CD4-positive, alpha-beta T cell (primary cell): ENCODE measurements at regions of chr19 and their contacts with region 1.

Region 1: DNA sequence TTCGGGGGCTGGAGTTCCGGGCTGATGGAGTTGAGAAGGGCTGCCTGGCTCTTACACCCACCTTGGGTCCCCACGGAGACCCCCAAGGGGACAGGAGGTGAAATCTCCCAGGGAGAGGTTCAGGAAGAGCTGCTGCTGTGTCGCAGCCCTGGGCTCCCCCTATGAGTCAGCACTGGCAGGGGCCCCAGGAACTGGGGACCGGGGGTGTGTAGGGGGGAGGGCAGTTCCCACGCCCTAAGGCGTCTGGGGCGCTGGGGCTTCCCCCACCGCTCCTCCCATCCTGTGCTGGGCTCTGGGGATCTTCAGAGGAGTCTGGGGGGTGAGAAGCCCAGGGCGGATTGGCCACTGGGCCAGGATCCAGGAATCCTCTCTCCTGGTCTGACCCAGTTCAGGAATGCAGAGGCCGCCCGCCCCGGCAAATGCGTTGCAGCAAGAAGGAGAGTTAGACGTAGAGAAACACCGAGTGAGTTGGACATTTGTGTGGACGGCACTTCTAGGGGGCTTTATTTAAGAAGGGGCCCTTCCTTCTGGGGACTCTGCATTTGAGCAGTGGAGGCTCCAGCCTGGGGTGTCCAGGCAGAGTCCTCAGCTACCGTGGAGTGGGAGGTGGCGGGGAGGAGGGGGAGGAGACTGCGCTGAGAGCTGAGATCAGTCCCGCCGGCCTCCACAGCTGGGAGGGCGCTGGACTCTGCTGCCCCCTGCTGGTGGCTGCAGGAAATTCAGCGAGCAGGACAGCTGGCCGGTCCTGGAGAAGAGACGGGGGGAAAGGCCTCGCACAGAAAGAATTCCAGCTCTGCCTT is 15.0 kb upstream of the NANOS3 start:
- DNase-seq: peak; percentile 81 to 96 (median 86)
- ATAC-seq: peak; percentile 84
- H3K4me3 ChIP-seq: peak overlapping the region; percentile 73
- H3K4me3 Mint-ChIP-seq: peak overlapping the region; percentile 94
- H3K27ac ChIP-seq: peak overlapping the region; percentile 84 to 94
- H3K27ac Mint-ChIP-seq: peak overlapping the region; percentile 86
- H3K4me1 ChIP-seq: peaks cover 42% of the 10 kb centered on the region
- H3K4me1 Mint-ChIP-seq: peaks cover 41% of the 10 kb centered on the region
- H3K27me3 ChIP-seq: peaks cover 22 to 25% of the 10 kb centered on the region in 2 experiments
- H3K27me3 Mint-ChIP-seq: peaks cover 30% of the 10 kb centered on the region
- CTCF ChIP-seq: peak; percentile 99

Region 2: DNA sequence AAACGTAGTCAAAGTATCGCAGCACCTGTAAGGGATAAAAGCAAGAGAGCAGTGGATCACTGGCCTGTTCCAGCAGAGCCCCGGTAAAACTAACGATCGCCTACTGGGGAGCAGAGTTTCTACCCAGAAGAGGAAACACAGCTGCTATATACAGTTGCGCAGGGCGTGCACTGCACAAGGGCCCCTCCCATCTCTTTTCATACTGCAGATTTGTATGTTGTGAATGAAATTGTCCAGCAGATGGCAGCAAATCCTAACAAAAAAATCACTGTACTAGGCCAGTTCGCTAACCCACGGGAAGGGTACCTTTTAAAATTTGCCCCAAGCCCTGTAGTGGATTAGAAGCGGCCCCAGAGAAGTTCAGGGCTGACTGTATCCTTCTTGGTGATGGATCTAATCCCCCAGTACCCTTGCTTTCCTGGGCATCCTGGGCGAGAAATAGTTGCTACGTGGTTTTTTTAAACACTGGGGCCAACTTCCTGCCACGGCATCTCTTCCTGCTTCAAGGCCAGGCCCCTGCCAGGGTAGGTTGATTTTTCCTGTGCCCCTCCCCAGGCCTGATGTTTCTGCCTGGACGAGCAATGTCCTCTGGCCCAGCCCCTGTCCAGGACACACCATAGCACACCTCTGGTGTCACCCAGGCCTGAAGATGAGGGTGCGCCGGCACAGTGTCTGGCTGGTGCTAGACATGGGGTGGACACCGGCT is 584.7 kb before region 1 on chr19:
- CTCF ChIA-PET with region 1: interaction called, 6 read pairs
- POLR2A ChIA-PET with region 1: no interaction called
- intact Hi-C with region 1: loop called (anchors 2 to 5 kb)
- DNase-seq: peak; percentile 22 to 90 (median 48)
- ATAC-seq: peak; percentile 89
- H3K4me3 ChIP-seq: peak overlapping the region; percentile 15
- H3K4me3 Mint-ChIP-seq: peak overlapping the region; percentile 42
- H3K27ac ChIP-seq: peak overlapping the region in 1 of 2 donors; percentile 66
- H3K27ac Mint-ChIP-seq: peak overlapping the region; percentile 65
- H3K4me1 ChIP-seq: peaks cover 29% of the 10 kb centered on the region
- H3K4me1 Mint-ChIP-seq: peaks cover 22% of the 10 kb centered on the region
- H3K27me3 ChIP-seq: no peaks in the 10 kb centered on the region
- H3K27me3 Mint-ChIP-seq: no peaks in the 10 kb centered on the region
- CTCF ChIP-seq: peak; percentile 68

Region 3: GRCh38 chr19:13597640-13598039 is 264.3 kb before region 1 on chr19:
- CTCF ChIA-PET with region 1: no interaction called
- POLR2A ChIA-PET with region 1: no interaction called
- intact Hi-C with region 1: loop called (anchors 1 to 2 kb)
- DNase-seq: peak in 12 of 14 experiments; percentile 9 to 77 (median 37)
- ATAC-seq: peak; percentile 69
- H3K4me3 ChIP-seq: no peak overlapping the region
- H3K4me3 Mint-ChIP-seq: no peak overlapping the region
- H3K27ac ChIP-seq: no peak overlapping the region
- H3K27ac Mint-ChIP-seq: no peak overlapping the region
- H3K4me1 ChIP-seq: peaks cover 3% of the 10 kb centered on the region
- H3K4me1 Mint-ChIP-seq: no peaks in the 10 kb centered on the region
- H3K27me3 ChIP-seq: peaks cover 0 to 3% of the 10 kb centered on the region in 2 experiments
- H3K27me3 Mint-ChIP-seq: peaks cover 25% of the 10 kb centered on the region
- CTCF ChIP-seq: peak; percentile 48

Region 4: GRCh38 chr19:13794757-13795589 is 67.0 kb before region 1 on chr19 and contains the start of gene ZSWIM4:
- CTCF ChIA-PET with region 1: interaction called, 78 read pairs
- POLR2A ChIA-PET with region 1: interaction called, 6 read pairs
- intact Hi-C with region 1: no loop called
- DNase-seq: peak; percentile 66 to 97 (median 90)
- ATAC-seq: peak; percentile 85
- H3K4me3 ChIP-seq: peak within 1 kb of the TSS; percentile 70
- H3K4me3 Mint-ChIP-seq: peak within 1 kb of the TSS; percentile 96
- H3K27ac ChIP-seq: peak within 1 kb of the TSS; percentile 59 to 64
- H3K27ac Mint-ChIP-seq: peak within 1 kb of the TSS; percentile 90
- H3K4me1 ChIP-seq: peaks cover 34% of the 10 kb centered on the region
- H3K4me1 Mint-ChIP-seq: peaks cover 40% of the 10 kb centered on the region
- H3K27me3 ChIP-seq: no peaks in the 10 kb centered on the region
- H3K27me3 Mint-ChIP-seq: no peaks in the 10 kb centered on the region
- CTCF ChIP-seq: no peak
- total RNA-seq, gene ZSWIM4: 3.5 to 3.8 TPM

Region 5: GRCh38 chr19:13839130-13839937 is 22.6 kb before region 1 on chr19:
- CTCF ChIA-PET with region 1: interaction called, 44 read pairs
- POLR2A ChIA-PET with region 1: interaction called, 22 read pairs
- intact Hi-C with region 1: no loop called
- DNase-seq: peak in 13 of 14 experiments; percentile 60 to 90 (median 78)
- ATAC-seq: peak; percentile 51
- H3K4me3 ChIP-seq: peak overlapping the region; percentile 73
- H3K4me3 Mint-ChIP-seq: peak overlapping the region; percentile 86
- H3K27ac ChIP-seq: peak overlapping the region; percentile 89 to 97
- H3K27ac Mint-ChIP-seq: peak overlapping the region; percentile 99
- H3K4me1 ChIP-seq: peaks cover 93% of the 10 kb centered on the region
- H3K4me1 Mint-ChIP-seq: peaks cover 69% of the 10 kb centered on the region
- H3K27me3 ChIP-seq: no peaks in the 10 kb centered on the region
- H3K27me3 Mint-ChIP-seq: no peaks in the 10 kb centered on the region
- CTCF ChIP-seq: no peak